BJ (cell line): ENCODE measurements at regions of chr11 and their contacts with region 1.

Region 1: GRCh38 chr11:61392981-61393595 is 701 bp downstream of the TMEM216 start:
- DNase-seq: no peak
- H3K4me3 ChIP-seq: peak overlapping the region; percentile 61
- H3K27me3 ChIP-seq: no peaks in the 10 kb centered on the region
- CTCF ChIP-seq: peak; percentile 28

Region 2: DNA sequence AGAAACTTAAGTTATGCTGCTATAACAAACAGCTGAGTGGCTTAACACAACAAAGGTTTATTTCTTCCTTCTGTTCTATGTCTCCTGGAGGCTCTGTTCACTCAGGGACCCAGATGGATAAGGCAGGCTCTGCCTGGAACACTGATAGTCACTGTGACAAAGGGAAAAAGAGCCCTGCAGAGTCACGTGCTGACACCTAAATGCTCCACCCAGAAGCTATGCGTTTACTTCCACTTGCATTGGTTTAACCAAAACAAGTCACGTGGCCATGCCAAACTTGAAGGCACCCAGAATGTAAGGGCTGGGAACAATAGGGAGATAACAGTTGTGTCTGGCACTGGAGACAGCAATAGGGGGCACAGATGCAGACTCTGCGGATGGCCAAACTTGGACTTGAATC is 639.8 kb before region 1 on chr11:
- CTCF ChIA-PET with region 1: no interaction called
- POLR2A ChIA-PET with region 1: no interaction called
- DNase-seq: no peak
- H3K4me3 ChIP-seq: no peak overlapping the region
- H3K27me3 ChIP-seq: no peaks in the 10 kb centered on the region
- CTCF ChIP-seq: no peak

Region 3: GRCh38 chr11:61361686-61362541 is 31.2 kb before region 1 on chr11 and contains the starts of genes CYB561A3 and TMEM138:
- CTCF ChIA-PET with region 1: interaction called, 13 read pairs
- POLR2A ChIA-PET with region 1: no interaction called
- DNase-seq: peak; percentile 73
- H3K4me3 ChIP-seq: peak within 1 kb of the TSS; percentile 77
- H3K27me3 ChIP-seq: no peaks in the 10 kb centered on the region
- CTCF ChIP-seq: no peak
- polyA plus RNA-seq, gene CYB561A3: 32.9 and 91.3 TPM in 2 replicates
- polyA plus RNA-seq, gene TMEM138: 55.6 and 73.9 TPM in 2 replicates

Region 4: DNA sequence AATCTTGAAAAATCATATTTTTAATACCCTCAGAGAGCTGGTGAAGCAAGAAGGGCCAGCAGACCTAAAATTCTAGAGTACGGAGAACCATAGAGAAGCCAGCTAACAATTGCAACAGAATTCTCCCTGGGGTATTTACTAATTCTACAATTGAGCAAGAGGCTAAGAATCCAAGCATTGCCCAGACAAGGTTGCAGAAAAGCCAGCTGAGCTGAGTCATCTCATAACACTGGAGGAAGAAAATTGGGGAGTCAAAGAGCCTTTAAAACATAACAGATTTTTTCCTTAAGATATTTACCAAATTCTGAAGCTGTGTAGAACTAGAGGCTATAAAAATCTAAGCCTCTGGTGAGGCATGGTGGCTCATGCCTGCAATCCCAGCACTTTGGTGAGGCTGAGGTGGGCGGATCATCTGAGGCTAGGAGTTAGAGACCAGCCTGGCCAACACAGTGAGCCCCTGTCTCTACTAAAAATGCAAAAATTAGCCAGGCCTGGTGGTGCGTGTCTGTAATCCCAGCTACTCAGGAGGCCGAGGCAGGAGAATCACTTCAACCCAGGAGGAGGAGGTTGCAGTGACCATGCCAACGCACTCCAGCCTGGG is 14.3 kb before region 1 on chr11:
- CTCF ChIA-PET with region 1: interaction called, 11 read pairs
- POLR2A ChIA-PET with region 1: no interaction called
- DNase-seq: peak; percentile 96
- H3K4me3 ChIP-seq: no peak overlapping the region
- H3K27me3 ChIP-seq: no peaks in the 10 kb centered on the region
- CTCF ChIP-seq: no peak

Region 5: GRCh38 chr11:61403658-61404057 is 10.6 kb after region 1 on chr11:
- CTCF ChIA-PET with region 1: interaction called, 13 read pairs
- POLR2A ChIA-PET with region 1: interaction called, 21 read pairs
- DNase-seq: no peak
- H3K4me3 ChIP-seq: no peak overlapping the region
- H3K27me3 ChIP-seq: no peaks in the 10 kb centered on the region
- CTCF ChIP-seq: no peak